ENCODE measurements at regions of chr19 and their contacts with region 1.

Region 1: GRCh38 chr19:34325981-34326787 is 38.8 kb upstream of the GPI start:
- DNase-seq: no peak
- H3K4me3 ChIP-seq: no peak overlapping the region
- H3K27ac ChIP-seq: no peak overlapping the region
- H3K4me1 ChIP-seq: peaks cover 9% of the 10 kb centered on the region
- H3K27me3 ChIP-seq: no peaks in the 10 kb centered on the region
- CTCF ChIP-seq: no peak

Region 2: GRCh38 chr19:34165295-34165738 is 160.9 kb before region 1 on chr19:
- CTCF ChIA-PET with region 1: no interaction called
- POLR2A ChIA-PET with region 1: no interaction called
- intact Hi-C with region 1: no loop called
- DNase-seq: no peak
- H3K4me3 ChIP-seq: no peak overlapping the region
- H3K27ac ChIP-seq: no peak overlapping the region
- H3K4me1 ChIP-seq: no peaks in the 10 kb centered on the region
- H3K27me3 ChIP-seq: no peaks in the 10 kb centered on the region
- CTCF ChIP-seq: no peak

Region 3: DNA sequence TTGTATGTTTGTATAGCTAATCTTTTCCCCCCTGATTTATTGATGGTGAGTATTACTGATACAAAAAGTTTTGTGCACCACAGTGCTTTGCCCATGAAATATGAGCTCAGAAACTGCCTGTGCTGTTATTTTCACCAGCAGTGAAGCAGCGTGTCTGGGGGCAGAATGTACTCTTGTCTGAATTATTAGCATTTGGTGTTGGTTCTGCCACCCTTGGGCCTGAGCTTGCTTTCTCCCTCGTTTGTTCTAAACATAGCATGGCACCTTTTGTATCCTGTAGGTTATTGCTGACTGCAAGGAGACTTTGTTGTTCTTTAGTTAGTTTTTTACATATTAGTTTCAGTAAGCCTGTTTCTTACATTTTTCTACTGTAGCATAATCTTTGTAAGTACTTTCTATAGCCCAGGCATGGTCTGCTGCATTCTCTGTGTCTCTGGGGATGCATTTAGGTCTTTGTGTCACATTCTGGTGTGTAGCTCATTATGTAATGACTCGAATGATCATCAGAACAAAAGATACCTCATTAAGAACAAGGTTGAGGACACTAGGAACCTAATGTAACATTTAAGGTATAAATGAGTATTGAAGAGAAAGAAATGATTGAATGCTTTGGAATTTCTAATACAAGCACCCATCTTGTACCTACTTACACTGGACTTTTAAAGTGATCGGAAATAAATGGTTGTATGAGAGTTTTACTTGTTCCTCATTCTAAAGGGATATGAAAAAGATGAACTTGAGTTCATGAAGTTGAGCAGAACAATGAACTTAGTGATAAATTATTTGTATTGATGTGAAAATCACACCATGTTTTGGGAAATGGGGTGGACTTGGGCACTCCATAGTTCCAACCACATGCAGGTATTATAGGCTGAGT is 11.5 kb before region 1 on chr19:
- CTCF ChIA-PET with region 1: interaction called, 10 read pairs
- POLR2A ChIA-PET with region 1: no interaction called
- intact Hi-C with region 1: no loop called
- DNase-seq: no peak
- H3K4me3 ChIP-seq: no peak overlapping the region
- H3K27ac ChIP-seq: no peak overlapping the region
- H3K4me1 ChIP-seq: peaks cover 22% of the 10 kb centered on the region
- H3K27me3 ChIP-seq: no peaks in the 10 kb centered on the region
- CTCF ChIP-seq: no peak